Activated T-helper 2 cell treated with anti-CD3 and anti-CD28 coated beads, Interferon-gamma antibody, Interleukin-2, Interleukin-4, amounts not matched to agents 10 μg/mL and 5 μg/mL and 100 μg/mL, durations not matched to agents 14 hours and 24 hours and 36 hours (primary cell): ENCODE measurements at regions of chr1 and their contacts with region 1.

Region 1: GRCh38 chr1:173038875-173039554 is 11.7 kb downstream of the TNFSF18 start:
- DNase-seq: no peak
- H3K4me3 Mint-ChIP-seq: no peak overlapping the region
- H3K27ac Mint-ChIP-seq: no peak overlapping the region
- H3K4me1 Mint-ChIP-seq: peaks cover 19% of the 10 kb centered on the region
- H3K27me3 Mint-ChIP-seq: peaks cover 6% of the 10 kb centered on the region

Region 2: GRCh38 chr1:173202430-173203145 is 163.6 kb after region 1 on chr1:
- intact Hi-C with region 1: loop called (anchors 10 kb)
- DNase-seq: no peak
- H3K4me3 Mint-ChIP-seq: no peak overlapping the region
- H3K27ac Mint-ChIP-seq: no peak overlapping the region
- H3K4me1 Mint-ChIP-seq: peaks cover 31% of the 10 kb centered on the region
- H3K27me3 Mint-ChIP-seq: peaks cover 49% of the 10 kb centered on the region